Endothelial cell of umbilical vein (primary cell): ENCODE measurements at regions of chr2 and their contacts with region 1.

Region 1: DNA sequence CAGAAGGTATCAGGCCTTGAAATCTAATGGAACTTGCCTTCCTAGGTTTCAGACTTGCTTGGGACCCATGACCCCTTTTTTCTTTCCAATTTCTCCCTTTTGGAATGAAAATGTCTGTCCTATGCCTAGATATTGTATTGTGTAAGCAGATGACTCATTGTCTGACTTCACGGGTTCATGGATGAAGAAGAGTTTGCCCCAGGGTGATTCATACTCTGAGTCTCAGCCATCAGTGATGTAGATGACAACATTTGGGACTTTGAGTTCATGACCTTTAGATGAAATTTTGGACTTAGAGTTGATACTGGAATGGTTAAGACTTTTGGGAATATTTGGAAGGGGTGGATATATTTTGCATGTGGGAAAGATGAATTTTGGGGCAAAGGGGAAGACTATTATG is 11.2 kb upstream of the SCYGR5 start:
- DNase-seq: peak; percentile 44
- H3K4me3 ChIP-seq: no peak overlapping the region
- H3K27ac ChIP-seq: no peak overlapping the region
- H3K4me1 ChIP-seq: no peaks in the 10 kb centered on the region
- H3K27me3 ChIP-seq: peaks cover 0 to 4% of the 10 kb centered on the region in 2 experiments
- CTCF ChIP-seq: no peak
- POLR2A ChIP-seq: no peak

Region 2: DNA sequence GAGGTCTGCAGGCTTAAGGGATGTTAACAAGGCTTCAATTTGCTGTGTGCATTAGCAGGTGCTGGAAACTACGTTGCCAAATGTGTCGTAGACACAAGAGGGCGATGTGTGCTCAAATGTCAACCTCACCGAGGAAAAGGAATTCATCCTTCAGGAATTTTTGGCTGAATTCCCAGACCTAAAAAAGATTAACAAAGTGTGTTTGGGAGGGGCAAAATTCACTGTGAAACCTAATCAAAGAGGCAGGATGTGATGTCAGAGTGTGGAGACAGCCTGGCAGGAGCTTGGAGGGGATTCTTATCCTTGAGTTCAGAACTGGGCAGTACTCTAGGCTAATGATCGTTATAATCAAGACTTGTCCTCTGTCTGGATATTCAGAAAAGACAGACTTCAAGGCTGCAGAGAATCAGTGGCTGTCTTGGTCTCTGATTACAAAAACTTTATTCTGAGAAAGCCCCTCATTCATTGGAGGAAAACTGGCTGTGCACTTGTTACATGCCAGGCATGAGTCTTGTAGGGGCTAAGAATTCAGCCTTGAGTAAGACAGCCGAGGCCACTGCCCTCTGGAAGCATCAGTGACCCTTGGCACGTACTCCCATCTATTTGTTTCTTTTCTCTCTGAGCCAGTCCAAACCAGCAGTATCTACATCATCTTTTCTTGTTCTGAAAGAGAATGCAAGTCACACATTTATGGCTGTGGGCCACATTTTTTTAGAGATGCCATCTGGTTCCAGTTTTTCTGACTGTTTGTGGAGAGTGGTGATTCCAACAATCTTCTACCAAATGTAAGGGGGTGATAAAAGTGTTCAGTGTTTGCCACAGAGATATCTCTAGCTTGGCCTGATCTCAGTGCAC is 249.1 kb before region 1 on chr2:
- CTCF ChIA-PET with region 1: interaction called, 26 read pairs
- POLR2A ChIA-PET with region 1: no interaction called
- dilution Hi-C with region 1: no loop called
- intact Hi-C with region 1: loop called (anchors 1 kb)
- DNase-seq: peak; percentile 96
- H3K4me3 ChIP-seq: no peak overlapping the region
- H3K27ac ChIP-seq: peak overlapping the region; percentile 85
- H3K4me1 ChIP-seq: peaks cover 8% of the 10 kb centered on the region
- H3K27me3 ChIP-seq: no peaks in the 10 kb centered on the region
- CTCF ChIP-seq: peak; percentile 57 to 81
- POLR2A ChIP-seq: peak; percentile 50

Region 3: DNA sequence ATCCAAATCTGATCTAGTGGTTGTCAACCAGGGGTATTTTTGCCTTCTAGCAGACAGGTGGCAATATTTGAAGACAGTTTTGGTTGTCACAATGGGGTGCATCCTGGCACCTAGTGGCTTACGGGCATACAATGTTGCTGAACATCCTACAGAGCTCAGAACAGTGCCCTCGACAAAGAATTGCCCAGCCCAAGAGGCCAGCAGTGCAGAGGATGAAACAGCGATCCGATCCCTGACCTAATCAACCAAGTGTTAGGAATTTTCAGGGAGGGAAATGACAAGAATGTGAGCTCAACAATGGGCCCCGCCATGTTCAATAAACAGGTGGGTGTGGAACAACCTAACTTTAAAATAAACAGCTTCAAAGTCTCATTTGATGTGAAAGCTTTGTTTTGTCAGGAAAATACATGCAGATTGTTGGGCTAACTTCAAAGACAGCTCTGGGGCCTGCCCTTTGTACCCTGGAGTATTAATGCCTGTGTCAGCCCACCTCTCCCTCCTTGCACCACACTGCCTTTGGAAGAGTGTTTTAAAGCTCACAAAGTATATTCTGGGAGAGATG is 11.4 kb before region 1 on chr2:
- CTCF ChIA-PET with region 1: interaction called, 12 read pairs
- POLR2A ChIA-PET with region 1: no interaction called
- dilution Hi-C with region 1: no loop called
- intact Hi-C with region 1: no loop called
- DNase-seq: no peak
- H3K4me3 ChIP-seq: no peak overlapping the region
- H3K27ac ChIP-seq: no peak overlapping the region
- H3K4me1 ChIP-seq: no peaks in the 10 kb centered on the region
- H3K27me3 ChIP-seq: no peaks in the 10 kb centered on the region
- CTCF ChIP-seq: no peak
- POLR2A ChIP-seq: no peak

Region 4: DNA sequence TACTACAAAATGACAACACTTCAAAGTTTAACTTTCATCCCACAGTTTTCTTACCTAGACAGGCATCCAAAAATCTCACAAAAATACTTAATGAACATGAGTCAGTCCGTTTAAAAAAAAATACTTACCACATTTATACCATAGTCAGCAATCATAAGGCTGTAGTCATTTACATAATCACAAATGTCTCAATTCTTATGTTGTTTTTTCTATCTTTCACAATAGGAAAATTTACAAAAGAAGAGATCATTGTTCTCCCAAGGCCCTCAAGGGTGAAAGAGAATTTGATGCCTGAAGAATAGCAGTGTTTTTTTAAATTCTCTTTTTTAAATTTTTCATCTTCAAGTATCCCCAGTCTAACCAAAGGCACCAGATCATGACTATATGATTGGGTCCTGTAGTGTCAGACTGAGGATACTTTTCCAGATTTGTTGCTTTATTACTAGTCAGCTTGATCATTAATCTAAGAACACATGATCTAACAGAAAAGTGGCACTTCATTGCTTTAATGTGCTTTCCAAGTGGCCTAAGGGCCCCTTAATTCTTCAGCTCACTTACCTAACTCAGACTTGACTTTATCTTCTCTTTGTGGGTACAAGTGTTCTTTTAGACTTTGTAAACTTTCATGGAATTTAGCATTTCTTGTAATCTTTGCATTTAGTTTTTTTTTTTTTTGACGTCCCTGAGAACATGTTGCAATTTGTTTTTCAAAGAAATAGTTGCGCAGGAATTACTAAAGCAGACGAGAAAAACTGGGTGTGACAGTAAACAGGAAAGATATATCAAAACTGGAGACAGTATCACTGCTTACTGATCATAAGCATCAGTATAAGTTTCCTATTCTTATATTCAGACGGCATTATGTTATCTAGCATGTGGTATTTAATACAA is 16.0 kb after region 1 on chr2:
- CTCF ChIA-PET with region 1: interaction called, 13 read pairs
- POLR2A ChIA-PET with region 1: no interaction called
- dilution Hi-C with region 1: no loop called
- intact Hi-C with region 1: no loop called
- DNase-seq: no peak
- H3K4me3 ChIP-seq: no peak overlapping the region
- H3K27ac ChIP-seq: no peak overlapping the region
- H3K4me1 ChIP-seq: no peaks in the 10 kb centered on the region
- H3K27me3 ChIP-seq: no peaks in the 10 kb centered on the region
- CTCF ChIP-seq: no peak
- POLR2A ChIP-seq: no peak

Region 5: DNA sequence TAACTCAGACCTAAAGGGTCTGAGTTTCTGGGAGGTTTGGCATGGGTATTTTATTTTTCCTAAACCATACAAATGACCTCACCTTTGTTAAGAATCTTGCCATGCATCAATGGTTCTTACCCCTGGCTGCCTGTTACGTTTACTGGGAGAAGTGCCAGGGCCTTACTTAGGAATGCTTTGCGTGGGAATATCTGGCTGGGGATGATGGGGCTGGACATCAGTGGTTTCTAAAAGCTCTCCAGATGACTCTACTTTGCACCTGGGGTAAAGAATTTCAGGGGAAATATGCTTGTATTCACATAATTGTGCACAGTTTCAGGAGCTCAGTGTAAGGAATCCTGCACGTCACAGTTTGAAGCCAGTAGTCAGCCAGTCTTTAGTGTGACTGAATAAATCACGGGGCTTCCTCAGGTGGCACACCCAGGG is 197.8 kb after region 1 on chr2:
- CTCF ChIA-PET with region 1: no interaction called
- POLR2A ChIA-PET with region 1: no interaction called
- dilution Hi-C with region 1: no loop called
- intact Hi-C with region 1: no loop called
- DNase-seq: no peak
- H3K4me3 ChIP-seq: no peak overlapping the region
- H3K27ac ChIP-seq: no peak overlapping the region
- H3K4me1 ChIP-seq: peaks cover 10% of the 10 kb centered on the region
- H3K27me3 ChIP-seq: no peaks in the 10 kb centered on the region
- CTCF ChIP-seq: no peak
- POLR2A ChIP-seq: no peak

Region 6: GRCh38 chr2:229273723-229274338 is 1618.4 kb after region 1 on chr2:
- CTCF ChIA-PET with region 1: interaction called, 19 read pairs
- POLR2A ChIA-PET with region 1: no interaction called
- dilution Hi-C with region 1: no loop called
- intact Hi-C with region 1: no loop called
- DNase-seq: peak; percentile 21
- H3K4me3 ChIP-seq: no peak overlapping the region
- H3K27ac ChIP-seq: no peak overlapping the region
- H3K4me1 ChIP-seq: no peaks in the 10 kb centered on the region
- H3K27me3 ChIP-seq: no peaks in the 10 kb centered on the region
- CTCF ChIP-seq: peak; percentile 45 to 51
- POLR2A ChIP-seq: no peak